Ascending aorta (tissue), 2 donors: ENCODE measurements at regions of chr3 and their contacts with region 1.

Region 1: DNA sequence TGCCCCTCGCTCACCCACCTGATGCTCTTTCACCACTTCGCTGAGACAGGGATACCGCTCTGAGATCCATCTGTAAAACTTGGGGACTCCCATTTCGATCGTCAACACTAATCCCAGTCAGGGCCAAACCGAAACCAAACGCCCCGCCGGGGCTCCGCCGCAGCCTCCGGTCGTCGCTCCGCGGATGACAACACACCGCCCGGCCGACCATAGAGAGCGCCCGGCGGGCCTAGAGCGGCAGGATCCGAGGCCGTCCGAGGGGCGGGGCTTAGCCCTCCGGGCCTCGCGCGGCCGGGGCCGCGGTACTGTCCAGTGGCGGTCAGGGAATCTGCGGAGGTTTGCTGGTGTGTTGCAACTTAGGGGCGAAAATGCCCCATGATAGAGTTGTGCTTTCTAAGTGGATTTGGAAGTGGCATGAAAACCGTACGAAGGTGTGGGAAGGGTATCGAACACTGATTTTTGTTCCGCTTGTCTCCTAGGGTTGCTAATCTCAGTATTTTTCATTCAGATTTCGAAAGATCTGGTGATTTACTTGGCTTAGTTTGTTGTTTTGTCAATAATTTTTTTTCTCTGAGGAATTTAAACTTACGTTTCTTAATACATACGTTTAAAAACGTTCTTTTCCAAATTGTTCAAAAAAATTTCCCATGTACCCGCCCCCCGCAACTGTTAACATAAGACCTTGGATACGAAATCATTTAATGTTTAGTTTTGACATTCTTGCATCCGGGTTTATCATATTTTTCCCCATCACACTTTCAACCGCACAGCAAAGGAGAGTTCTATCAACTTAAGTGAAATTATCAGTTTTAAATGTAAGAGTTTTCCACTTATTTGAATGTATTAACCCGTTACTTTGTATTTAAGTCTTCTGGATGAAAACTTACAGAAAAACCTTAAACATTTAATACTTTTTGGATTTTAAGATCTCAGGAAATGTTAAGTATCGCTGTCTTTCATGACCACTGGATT is at the start of gene XRN1:
- DNase-seq: peak; percentile 83 to 98
- H3K4me3 ChIP-seq: peak within 1 kb of the TSS; percentile 88 to 90
- H3K27ac ChIP-seq: peak within 1 kb of the TSS; percentile 98
- H3K4me1 ChIP-seq: peaks cover 0 to 6% of the 10 kb centered on the region in 2 donors
- H3K27me3 ChIP-seq: no peaks in the 10 kb centered on the region
- CTCF ChIP-seq: no peak
- total RNA-seq, gene XRN1: 10.1 TPM

Region 2: DNA sequence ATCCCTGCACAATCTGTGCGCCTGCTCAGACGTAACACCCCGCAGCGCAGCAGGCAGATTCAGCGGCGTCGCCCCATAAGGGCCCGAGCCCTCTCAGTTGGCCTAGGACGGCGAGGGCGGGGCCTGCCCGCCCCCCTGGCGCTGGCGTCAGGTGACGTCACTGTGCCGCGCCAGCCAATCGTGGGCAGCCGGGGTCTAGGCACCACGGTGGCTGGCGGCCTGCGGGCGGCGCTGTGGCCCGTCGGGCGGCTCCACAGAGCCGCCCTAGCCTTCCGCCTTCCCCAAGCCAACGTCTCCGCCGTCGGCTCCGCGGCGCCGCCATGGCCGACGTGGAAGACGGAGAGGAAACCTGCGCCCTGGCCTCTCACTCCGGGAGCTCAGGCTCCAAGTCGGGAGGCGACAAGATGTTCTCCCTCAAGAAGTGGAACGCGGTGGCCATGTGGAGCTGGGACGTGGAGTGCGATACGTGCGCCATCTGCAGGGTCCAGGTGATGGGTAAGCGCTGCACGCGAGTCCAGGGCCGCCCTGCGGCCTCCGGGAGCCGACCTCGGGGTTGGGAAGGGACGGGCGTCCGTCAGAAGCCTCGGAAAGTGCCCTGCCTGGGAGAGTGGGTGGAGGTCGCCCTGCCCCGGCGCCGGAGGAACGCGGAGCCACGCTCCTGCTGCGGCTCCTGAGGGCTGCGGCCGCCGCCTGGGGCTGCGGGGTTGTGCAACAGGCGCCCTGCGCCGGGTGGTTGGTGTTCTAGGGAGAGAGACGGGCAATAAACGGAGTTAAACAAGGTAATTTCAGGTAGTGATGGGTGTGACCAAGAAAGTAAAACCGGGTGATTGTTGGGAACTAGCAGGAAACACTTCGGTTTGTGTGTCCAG is 709.9 kb before region 1 on chr3 and contains the start of gene RNF7:
- intact Hi-C with region 1: loop called (anchors 5 kb)
- DNase-seq: peak; percentile 85 to 98
- H3K4me3 ChIP-seq: peak within 1 kb of the TSS; percentile 91 to 97
- H3K27ac ChIP-seq: peak within 1 kb of the TSS; percentile 93 to 99
- H3K4me1 ChIP-seq: peaks cover 0 to 24% of the 10 kb centered on the region in 2 donors
- H3K27me3 ChIP-seq: no peaks in the 10 kb centered on the region
- CTCF ChIP-seq: peak; percentile 87 to 97 (median 89)
- total RNA-seq, gene RNF7: 32.1 TPM

Region 3: GRCh38 chr3:142578327-142579223 is 130.4 kb after region 1 on chr3 and contains the start of gene ATR:
- intact Hi-C with region 1: loop called (anchors 1 kb)
- DNase-seq: peak; percentile 85 to 98
- H3K4me3 ChIP-seq: peak within 1 kb of the TSS; percentile 65 to 81
- H3K27ac ChIP-seq: peak within 1 kb of the TSS; percentile 91 to 94
- H3K4me1 ChIP-seq: peaks cover 0 to 10% of the 10 kb centered on the region in 2 donors
- H3K27me3 ChIP-seq: no peaks in the 10 kb centered on the region
- CTCF ChIP-seq: no peak
- total RNA-seq, gene ATR: 8.3 TPM

Region 4: GRCh38 chr3:143001369-143002082 is 553.4 kb after region 1 on chr3 and contains the start of gene U2SURP:
- intact Hi-C with region 1: loop called (anchors 1 kb)
- DNase-seq: peak; percentile 85 to 98
- H3K4me3 ChIP-seq: peak within 1 kb of the TSS; percentile 93 to 94
- H3K27ac ChIP-seq: peak within 1 kb of the TSS; percentile 93
- H3K4me1 ChIP-seq: peaks cover 4 to 28% of the 10 kb centered on the region in 2 donors
- H3K27me3 ChIP-seq: no peaks in the 10 kb centered on the region
- CTCF ChIP-seq: peak in 1 of 3 experiments; percentile 26
- total RNA-seq, gene U2SURP: 68.6 TPM